Heart left ventricle (tissue), 16 donors: ENCODE measurements at regions of chr12 and their contacts with region 1.

Region 1: GRCh38 chr12:56041552-56042429 is at the start of gene RPS26:
- DNase-seq: peak; percentile 95 to 99 (median 97)
- ATAC-seq: peak; percentile 96 to 98 (median 97)
- H3K4me3 ChIP-seq: peak within 1 kb of the TSS; percentile 66 to 97 (median 83)
- H3K27ac ChIP-seq: peak within 1 kb of the TSS; percentile 89 to 99 (median 96)
- H3K4me1 ChIP-seq: peaks cover 3 to 23% (median 17%) of the 10 kb centered on the region in 12 donors
- H3K27me3 ChIP-seq: no peaks in the 10 kb centered on the region
- CTCF ChIP-seq: peak; percentile 22 to 65 (median 50)
- POLR2A ChIP-seq: peak in 1 of 2 donors; percentile 52
- total RNA-seq, gene RPS26: 11.7 to 616 (median 23.2) TPM

Region 2: GRCh38 chr12:55624056-55624455 is 417.7 kb before region 1 on chr12:
- intact Hi-C with region 1: no loop called
- DNase-seq: no peak
- ATAC-seq: no peak
- H3K4me3 ChIP-seq: no peak overlapping the region
- H3K27ac ChIP-seq: no peak overlapping the region
- H3K4me1 ChIP-seq: peaks cover 0 to 21% (median 3%) of the 10 kb centered on the region in 12 donors
- H3K27me3 ChIP-seq: peaks cover 0 to 4% (median 0%) of the 10 kb centered on the region in 9 donors
- CTCF ChIP-seq: no peak
- POLR2A ChIP-seq: no peak

Region 3: DNA sequence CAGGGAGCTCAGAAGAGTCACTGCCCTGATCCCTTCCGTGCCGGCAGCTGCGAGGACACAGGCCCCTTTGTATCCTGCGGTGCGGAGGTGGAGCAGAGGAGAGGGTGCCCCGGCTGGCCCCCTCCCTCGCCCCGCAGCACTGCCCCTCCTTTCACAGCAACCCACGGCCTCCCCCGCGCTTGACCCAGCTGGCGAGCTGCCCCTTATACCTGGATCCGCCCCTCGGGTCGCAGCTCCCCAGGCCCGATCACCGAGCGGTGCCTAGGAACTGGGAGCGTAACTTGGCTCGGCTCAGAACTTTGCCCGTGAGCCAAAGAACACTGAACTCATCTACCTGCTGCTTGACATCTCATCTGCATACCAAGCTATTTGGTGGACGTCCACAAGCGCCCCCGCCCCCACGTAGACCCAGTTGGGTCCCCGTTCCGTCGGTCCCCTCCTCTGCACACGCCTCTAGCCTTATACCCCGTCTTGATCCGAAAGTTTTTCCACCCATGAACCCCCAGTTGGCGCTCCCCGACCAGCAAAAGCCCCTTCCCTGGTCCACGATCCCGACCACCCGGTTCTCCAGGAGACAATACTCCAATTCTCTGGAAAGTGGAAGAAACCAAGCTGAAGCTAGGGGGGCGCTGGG is 211.7 kb before region 1 on chr12:
- intact Hi-C with region 1: loop called in 1 of 10 experiments (anchors 10 kb)
- DNase-seq: peak; percentile 45 to 70 (median 55)
- ATAC-seq: peak; percentile 19 to 47 (median 37)
- H3K4me3 ChIP-seq: peak overlapping the region; percentile 72 to 97 (median 88)
- H3K27ac ChIP-seq: peak overlapping the region; percentile 87 to 95 (median 92)
- H3K4me1 ChIP-seq: peaks cover 0 to 53% (median 34%) of the 10 kb centered on the region in 12 donors
- H3K27me3 ChIP-seq: no peaks in the 10 kb centered on the region
- CTCF ChIP-seq: no peak
- POLR2A ChIP-seq: no peak

Region 4: DNA sequence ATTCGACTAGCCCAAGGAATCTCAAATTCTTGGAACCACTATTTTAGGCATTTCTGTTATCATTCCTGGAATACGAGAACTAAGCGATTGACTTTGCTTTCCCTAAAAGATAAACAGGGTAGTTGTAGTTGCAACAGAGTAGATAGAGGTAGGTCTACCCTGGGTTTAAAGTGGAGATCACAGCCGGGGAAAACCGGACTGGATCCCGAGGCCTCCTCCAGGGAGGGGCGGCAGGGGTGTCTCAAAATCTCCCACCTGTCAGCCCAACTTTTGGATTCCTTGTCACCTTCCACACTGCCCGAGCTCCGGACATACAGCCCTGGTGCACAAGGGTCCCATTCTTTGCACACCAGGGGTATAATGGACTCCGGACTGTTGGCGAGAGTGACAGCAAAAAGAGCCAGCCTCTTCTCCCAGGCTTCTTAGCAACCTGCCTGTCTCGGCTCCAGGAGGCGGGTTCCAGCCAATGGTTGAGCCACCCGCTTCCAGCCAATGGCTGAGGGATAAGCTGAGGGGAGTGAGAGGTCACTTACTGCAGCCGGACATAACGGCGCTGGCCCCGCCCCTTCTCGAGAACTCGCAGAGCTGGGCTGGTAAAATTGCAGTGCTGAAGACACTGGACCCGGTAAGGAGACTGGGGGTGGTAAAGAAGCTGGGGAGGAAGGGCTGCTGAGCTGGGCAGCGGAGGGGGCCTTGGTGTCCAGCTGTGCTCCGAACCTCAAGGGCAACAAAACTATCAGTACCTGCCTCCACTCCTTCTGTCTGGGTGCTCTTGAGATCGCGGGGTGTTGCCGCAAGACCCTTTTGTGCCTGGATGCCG is 44.9 kb before region 1 on chr12 and contains the start of gene SUOX:
- intact Hi-C with region 1: loop called in 9 of 10 experiments (anchors 1 to 10 kb)
- DNase-seq: peak; percentile 97 to 98 (median 97)
- ATAC-seq: peak; percentile 99 to 100 (median 100)
- H3K4me3 ChIP-seq: peak within 1 kb of the TSS; percentile 27 to 82 (median 68)
- H3K27ac ChIP-seq: peak within 1 kb of the TSS; percentile 63 to 94 (median 87)
- H3K4me1 ChIP-seq: peaks cover 0 to 21% (median 11%) of the 10 kb centered on the region in 12 donors
- H3K27me3 ChIP-seq: no peaks in the 10 kb centered on the region
- CTCF ChIP-seq: no peak
- POLR2A ChIP-seq: peak in 1 of 2 donors; percentile 64
- total RNA-seq, gene SUOX: 25.0 to 59.5 (median 32.0) TPM

Region 5: GRCh38 chr12:56098592-56098991 is 56.8 kb after region 1 on chr12:
- intact Hi-C with region 1: loop called in 4 of 10 experiments (anchors 5 kb)
- DNase-seq: no peak
- ATAC-seq: no peak
- H3K4me3 ChIP-seq: no peak overlapping the region
- H3K27ac ChIP-seq: no peak overlapping the region
- H3K4me1 ChIP-seq: peaks cover 0 to 15% (median 5%) of the 10 kb centered on the region in 12 donors
- H3K27me3 ChIP-seq: peaks cover 0 to 5% (median 0%) of the 10 kb centered on the region in 9 donors
- CTCF ChIP-seq: no peak
- POLR2A ChIP-seq: no peak

Region 6: GRCh38 chr12:56104109-56104814 is 62.5 kb after region 1 on chr12 and contains the start of gene PA2G4:
- intact Hi-C with region 1: loop called in 4 of 10 experiments (anchors 5 kb)
- DNase-seq: peak; percentile 98 to 99 (median 99)
- ATAC-seq: peak; percentile 98 to 99 (median 99)
- H3K4me3 ChIP-seq: peak within 1 kb of the TSS; percentile 45 to 93 (median 84)
- H3K27ac ChIP-seq: peak within 1 kb of the TSS; percentile 6 to 92 (median 84)
- H3K4me1 ChIP-seq: peaks cover 0 to 37% (median 22%) of the 10 kb centered on the region in 12 donors
- H3K27me3 ChIP-seq: no peaks in the 10 kb centered on the region
- CTCF ChIP-seq: peak in 1 of 12 donors; percentile 7
- POLR2A ChIP-seq: peak; percentile 55 to 93
- total RNA-seq, gene PA2G4: 66.0 to 105 (median 72.4) TPM